AG04449 (cell line): ENCODE measurements at regions of chr6 and their contacts with region 1.

Region 1: DNA sequence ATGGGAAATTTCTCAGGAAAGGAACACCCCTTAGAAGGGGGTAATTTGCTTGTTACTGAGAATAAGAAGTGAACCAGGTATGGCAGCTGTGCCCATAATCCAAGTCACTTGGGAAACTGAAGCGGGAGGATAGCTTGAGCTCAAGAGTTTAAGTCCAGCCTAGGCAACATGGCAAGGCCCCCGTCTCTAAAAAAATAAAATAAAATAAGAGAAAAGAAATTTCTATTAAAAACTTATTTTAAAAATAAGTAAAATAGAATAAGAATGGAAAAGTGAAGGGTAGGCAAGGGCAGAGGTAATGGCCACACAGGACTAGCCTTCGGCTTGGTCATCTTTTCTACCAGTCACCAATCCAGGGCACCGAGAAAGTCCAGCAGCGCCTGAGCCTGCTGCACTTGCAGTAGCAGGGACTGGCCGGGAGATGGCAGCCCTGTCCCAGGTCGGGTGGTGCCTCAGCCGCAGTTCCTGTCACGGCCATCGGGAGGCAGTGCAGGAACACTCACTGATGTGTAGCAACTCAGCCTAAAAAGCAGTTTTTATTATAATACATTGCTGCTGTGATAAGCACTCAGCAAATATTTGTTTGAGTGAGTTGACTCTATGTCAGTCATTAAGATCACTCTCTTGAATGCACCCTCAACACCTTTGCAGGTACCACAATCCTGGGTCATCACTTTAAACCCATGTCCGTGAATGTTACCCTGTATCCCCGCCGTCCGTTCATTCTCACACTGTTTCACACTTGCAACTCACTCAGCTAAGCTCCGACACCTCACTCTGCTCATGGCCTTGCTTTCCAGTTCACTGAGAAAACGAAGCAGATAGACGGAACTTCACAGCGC is 23.2 kb upstream of the GCM1 start:
- DNase-seq: no peak
- H3K4me3 ChIP-seq: no peak overlapping the region
- CTCF ChIP-seq: peak; percentile 100

Region 2: DNA sequence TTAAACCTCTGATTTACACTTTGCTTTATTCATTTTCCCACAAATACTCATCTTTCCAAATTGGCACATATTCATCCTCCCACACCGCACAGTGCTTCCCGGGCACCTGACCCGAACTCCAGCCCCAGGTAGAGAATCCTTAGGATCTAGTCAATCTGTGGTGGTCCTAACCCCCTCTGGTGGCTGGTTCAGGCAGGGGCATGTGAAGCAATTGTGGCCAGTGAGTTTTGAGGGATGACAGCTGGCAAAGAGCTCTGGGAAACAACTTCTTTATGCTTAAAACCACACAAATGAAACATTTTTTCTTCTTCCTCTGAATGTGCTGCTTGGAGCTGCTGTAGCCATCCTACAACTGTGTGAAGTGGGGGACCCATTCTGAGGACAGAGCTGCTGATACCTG is 122.3 kb after region 1 on chr6:
- CTCF ChIA-PET with region 1: interaction called, 18 read pairs
- POLR2A ChIA-PET with region 1: no interaction called
- DNase-seq: no peak
- H3K4me3 ChIP-seq: no peak overlapping the region
- CTCF ChIP-seq: peak; percentile 53

Region 3: GRCh38 chr6:53410508-53411258 is 238.9 kb after region 1 on chr6:
- CTCF ChIA-PET with region 1: interaction called, 49 read pairs
- POLR2A ChIA-PET with region 1: no interaction called
- DNase-seq: no peak
- H3K4me3 ChIP-seq: no peak overlapping the region
- CTCF ChIP-seq: peak; percentile 71

Region 4: GRCh38 chr6:53437557-53438202 is 265.9 kb after region 1 on chr6:
- CTCF ChIA-PET with region 1: interaction called, 149 read pairs
- POLR2A ChIA-PET with region 1: no interaction called
- DNase-seq: no peak
- H3K4me3 ChIP-seq: no peak overlapping the region
- CTCF ChIP-seq: peak; percentile 46

Region 5: GRCh38 chr6:53484476-53485280 is 312.9 kb after region 1 on chr6:
- CTCF ChIA-PET with region 1: interaction called, 279 read pairs
- POLR2A ChIA-PET with region 1: no interaction called
- DNase-seq: no peak
- H3K4me3 ChIP-seq: no peak overlapping the region
- CTCF ChIP-seq: peak; percentile 66